H1 (cell line): ENCODE measurements at regions of chr5 and their contacts with region 1.

Region 1: DNA sequence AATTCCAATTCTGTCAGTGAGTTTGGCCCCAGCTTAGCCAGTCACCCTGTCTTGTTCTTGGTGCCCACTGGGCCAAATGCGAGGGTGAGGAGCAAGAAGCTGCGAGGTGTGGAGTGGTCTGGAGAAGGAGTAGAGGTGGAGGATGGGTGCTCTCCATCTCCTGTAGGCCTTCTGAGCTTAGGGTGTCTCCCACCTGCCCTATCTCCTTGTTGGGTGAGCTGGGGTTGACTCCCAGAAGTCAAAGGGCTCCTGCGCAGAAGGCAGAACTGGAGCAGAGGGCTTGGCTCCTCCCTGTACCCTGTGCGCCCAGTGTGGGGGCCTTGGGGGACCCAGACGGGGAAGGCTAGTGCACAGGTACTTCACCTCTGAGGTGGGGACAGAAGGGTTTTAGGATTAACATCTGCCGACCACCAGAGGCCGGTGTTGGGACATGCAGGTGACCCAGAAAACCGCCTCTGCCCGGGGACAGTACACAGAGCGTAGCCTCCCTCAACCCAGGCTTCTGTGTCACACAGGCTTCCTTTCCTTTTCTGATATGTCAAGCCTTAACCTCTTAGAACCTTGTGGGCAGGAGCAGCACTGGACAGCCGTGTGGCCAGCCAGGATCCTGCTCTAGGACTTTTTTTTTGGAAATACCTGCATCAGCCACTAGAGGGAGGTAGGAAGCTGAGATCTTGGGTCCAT is 16.9 kb downstream of the IL5 start:
- DNase-seq: peak; percentile 21 to 74
- H3K4me3 ChIP-seq: peak overlapping the region in 1 of 4 experiments; percentile 33; a peak in 1 of 8 replicates
- H3K27ac ChIP-seq: no peak overlapping the region
- H3K4me1 ChIP-seq: no peaks in the 10 kb centered on the region
- H3K27me3 ChIP-seq: no peaks in the 10 kb centered on the region
- CTCF ChIP-seq: peak; percentile 31 to 80 (median 69)
- EP300 ChIP-seq: no peak
- POLR2A ChIP-seq: no peak
- RAD21 ChIP-seq: peak; percentile 60 to 63

Region 2: GRCh38 chr5:132327252-132327955 is 199.0 kb before region 1 on chr5:
- CTCF ChIA-PET with region 1: no interaction called
- POLR2A ChIA-PET with region 1: no interaction called
- DNase-seq: no peak
- H3K4me3 ChIP-seq: no peak overlapping the region
- H3K27ac ChIP-seq: no peak overlapping the region
- H3K4me1 ChIP-seq: peaks cover 3 to 5% (median 4%) of the 10 kb centered on the region in 4 experiments; a peak in 5 of 7 replicates
- H3K27me3 ChIP-seq: no peaks in the 10 kb centered on the region
- CTCF ChIP-seq: no peak
- EP300 ChIP-seq: no peak
- POLR2A ChIP-seq: no peak
- RAD21 ChIP-seq: no peak

Region 3: GRCh38 chr5:132394667-132395259 is 131.7 kb before region 1 on chr5:
- CTCF ChIA-PET with region 1: interaction called, 11 read pairs
- POLR2A ChIA-PET with region 1: no interaction called
- DNase-seq: no peak
- H3K4me3 ChIP-seq: no peak overlapping the region
- H3K27ac ChIP-seq: no peak overlapping the region
- H3K4me1 ChIP-seq: no peaks in the 10 kb centered on the region
- H3K27me3 ChIP-seq: no peaks in the 10 kb centered on the region
- CTCF ChIP-seq: no peak
- EP300 ChIP-seq: no peak
- POLR2A ChIP-seq: no peak
- RAD21 ChIP-seq: no peak

Region 4: DNA sequence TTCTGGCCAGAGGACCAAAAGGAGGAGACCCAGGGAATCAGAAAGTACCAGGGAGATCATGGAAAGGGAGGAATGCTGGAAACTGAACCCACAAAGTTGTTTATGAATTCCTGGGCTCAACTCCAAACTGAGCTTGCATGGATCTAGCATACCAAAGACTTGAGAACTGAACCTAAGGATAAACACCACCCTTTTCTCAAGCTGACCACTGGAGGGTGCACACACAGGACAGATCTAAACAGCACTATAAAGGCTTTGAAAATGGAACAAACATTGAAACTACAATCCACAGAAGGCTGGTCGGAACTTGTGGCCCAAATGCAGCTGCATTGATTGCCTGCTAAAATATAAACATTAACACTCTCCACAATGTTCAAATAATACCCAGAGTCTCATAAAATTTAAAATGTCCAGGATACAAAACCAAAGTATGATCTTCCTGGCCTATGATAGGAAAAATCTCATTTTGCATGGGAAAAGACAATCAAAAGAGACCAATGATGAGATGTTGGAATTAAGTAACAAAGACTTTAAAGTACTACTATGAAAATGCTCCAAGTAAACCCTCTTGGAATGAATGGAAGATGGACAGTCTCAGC is 20.2 kb before region 1 on chr5:
- CTCF ChIA-PET with region 1: interaction called, 31 read pairs
- POLR2A ChIA-PET with region 1: no interaction called
- DNase-seq: no peak
- H3K4me3 ChIP-seq: no peak overlapping the region
- H3K27ac ChIP-seq: no peak overlapping the region
- H3K4me1 ChIP-seq: peaks cover 0 to 2% (median 0%) of the 10 kb centered on the region in 4 experiments; a peak in 2 of 7 replicates
- H3K27me3 ChIP-seq: no peaks in the 10 kb centered on the region
- CTCF ChIP-seq: peak in 2 of 3 experiments; percentile 47 to 60; a peak in 3 of 4 replicates
- EP300 ChIP-seq: no peak
- POLR2A ChIP-seq: no peak
- RAD21 ChIP-seq: peak; percentile 28 to 54; a peak in 3 of 4 replicates

Region 5: GRCh38 chr5:132540764-132541163 is 14.3 kb after region 1 on chr5:
- CTCF ChIA-PET with region 1: interaction called, 46 read pairs
- POLR2A ChIA-PET with region 1: no interaction called
- DNase-seq: no peak
- H3K4me3 ChIP-seq: no peak overlapping the region
- H3K27ac ChIP-seq: no peak overlapping the region
- H3K4me1 ChIP-seq: no peaks in the 10 kb centered on the region; a peak in 1 of 7 replicates
- H3K27me3 ChIP-seq: no peaks in the 10 kb centered on the region
- CTCF ChIP-seq: no peak
- EP300 ChIP-seq: no peak
- POLR2A ChIP-seq: no peak
- RAD21 ChIP-seq: no peak

Region 6: DNA sequence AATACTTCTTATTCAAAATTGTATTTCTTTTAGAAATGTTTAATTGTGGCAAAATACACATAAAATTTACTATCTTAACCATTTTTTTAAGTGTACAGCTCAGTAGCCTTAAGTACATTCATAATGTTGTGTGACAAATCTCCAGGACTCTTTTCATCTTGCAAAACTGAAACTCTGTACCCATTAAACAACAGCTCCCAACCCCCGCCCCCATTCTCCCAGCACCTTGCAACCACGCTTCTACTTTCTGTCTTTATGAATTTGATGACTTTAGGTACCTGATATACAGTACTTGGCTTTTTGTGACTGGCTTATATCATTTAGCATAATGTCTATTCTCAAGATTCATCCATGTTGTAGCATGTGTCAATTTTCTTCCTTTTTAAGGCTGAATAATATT is 19.7 kb after region 1 on chr5:
- CTCF ChIA-PET with region 1: interaction called, 27 read pairs
- POLR2A ChIA-PET with region 1: no interaction called
- DNase-seq: no peak
- H3K4me3 ChIP-seq: no peak overlapping the region
- H3K27ac ChIP-seq: no peak overlapping the region
- H3K4me1 ChIP-seq: no peaks in the 10 kb centered on the region
- H3K27me3 ChIP-seq: no peaks in the 10 kb centered on the region; a peak in 1 of 7 replicates
- CTCF ChIP-seq: no peak
- EP300 ChIP-seq: no peak
- POLR2A ChIP-seq: no peak
- RAD21 ChIP-seq: no peak

Region 7: DNA sequence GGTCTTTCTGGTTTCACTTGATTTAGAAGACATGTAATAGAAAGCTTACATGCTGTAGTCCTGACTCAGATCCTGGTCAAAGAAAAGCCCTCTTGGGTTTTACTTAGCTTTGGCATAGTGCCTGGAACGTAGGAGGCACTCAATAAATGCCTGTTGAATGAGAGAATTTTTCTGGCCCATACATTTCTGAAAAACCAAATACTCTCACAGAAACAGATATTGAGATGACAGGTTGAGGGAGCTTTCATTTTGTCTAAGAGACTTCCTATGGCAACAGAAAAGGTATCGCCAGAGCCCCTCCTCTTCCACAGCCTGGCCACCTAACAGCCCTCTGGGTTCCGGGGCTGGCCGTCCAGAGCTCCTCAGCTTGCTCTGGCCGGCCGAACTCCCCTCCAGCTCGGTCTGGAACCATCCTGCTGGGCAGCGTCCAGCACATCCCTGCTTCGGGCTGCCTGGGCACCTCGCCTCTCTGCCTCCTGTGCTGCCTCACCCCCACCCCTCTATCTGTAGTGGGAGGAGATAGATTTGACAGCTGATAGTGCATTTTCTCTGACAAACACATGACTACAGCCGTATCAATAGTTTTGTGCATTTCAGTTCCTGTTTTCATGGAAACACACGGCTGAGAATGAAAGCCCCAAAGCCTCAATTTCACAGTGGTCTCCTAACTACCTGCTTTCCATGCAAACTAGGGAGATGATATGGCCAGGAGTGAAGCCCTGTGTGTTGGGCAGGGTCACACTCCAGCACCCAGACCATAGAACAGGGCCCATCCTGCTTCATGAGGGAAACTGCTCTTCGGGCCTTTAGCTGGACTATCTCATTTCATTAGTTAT is 148.5 kb after region 1 on chr5:
- CTCF ChIA-PET with region 1: interaction called, 23 read pairs
- POLR2A ChIA-PET with region 1: no interaction called
- DNase-seq: no peak
- H3K4me3 ChIP-seq: no peak overlapping the region
- H3K27ac ChIP-seq: no peak overlapping the region
- H3K4me1 ChIP-seq: no peaks in the 10 kb centered on the region
- H3K27me3 ChIP-seq: no peaks in the 10 kb centered on the region
- CTCF ChIP-seq: no peak
- EP300 ChIP-seq: no peak
- POLR2A ChIP-seq: no peak
- RAD21 ChIP-seq: no peak